Caco-2 (cell line): ENCODE measurements at regions of chr9 and their contacts with region 1.

Region 1: GRCh38 chr9:14353222-14354056 is 39.5 kb upstream of the NFIB start:
- DNase-seq: peak; percentile 75 to 85
- H3K4me3 ChIP-seq: no peak overlapping the region
- H3K4me3 Mint-ChIP-seq: no peak overlapping the region
- H3K27ac Mint-ChIP-seq: no peak overlapping the region
- H3K4me1 ChIP-seq: no peaks in the 10 kb centered on the region
- H3K4me1 Mint-ChIP-seq: no peaks in the 10 kb centered on the region
- H3K27me3 ChIP-seq: no peaks in the 10 kb centered on the region; the same call in 1 of the 2 replicates
- H3K27me3 Mint-ChIP-seq: peaks cover 24% of the 10 kb centered on the region
- CTCF ChIP-seq: peak; percentile 63 to 84

Region 2: GRCh38 chr9:13351778-13352386 is 1001.6 kb before region 1 on chr9:
- CTCF ChIA-PET with region 1: no interaction called
- POLR2A ChIA-PET with region 1: no interaction called
- intact Hi-C with region 1: loop called (anchors 5 kb)
- DNase-seq: no peak
- H3K4me3 ChIP-seq: no peak overlapping the region
- H3K4me3 Mint-ChIP-seq: no peak overlapping the region
- H3K27ac Mint-ChIP-seq: no peak overlapping the region
- H3K4me1 ChIP-seq: no peaks in the 10 kb centered on the region
- H3K4me1 Mint-ChIP-seq: no peaks in the 10 kb centered on the region
- H3K27me3 ChIP-seq: no peaks in the 10 kb centered on the region
- H3K27me3 Mint-ChIP-seq: peaks cover 3% of the 10 kb centered on the region
- CTCF ChIP-seq: peak in 1 of 2 experiments; percentile 22

Region 3: GRCh38 chr9:13898957-13899356 is 454.5 kb before region 1 on chr9:
- CTCF ChIA-PET with region 1: no interaction called
- POLR2A ChIA-PET with region 1: no interaction called
- intact Hi-C with region 1: no loop called
- DNase-seq: no peak
- H3K4me3 ChIP-seq: no peak overlapping the region
- H3K4me3 Mint-ChIP-seq: no peak overlapping the region
- H3K27ac Mint-ChIP-seq: no peak overlapping the region
- H3K4me1 ChIP-seq: no peaks in the 10 kb centered on the region
- H3K4me1 Mint-ChIP-seq: no peaks in the 10 kb centered on the region
- H3K27me3 ChIP-seq: no peaks in the 10 kb centered on the region
- H3K27me3 Mint-ChIP-seq: no peaks in the 10 kb centered on the region
- CTCF ChIP-seq: no peak

Region 4: DNA sequence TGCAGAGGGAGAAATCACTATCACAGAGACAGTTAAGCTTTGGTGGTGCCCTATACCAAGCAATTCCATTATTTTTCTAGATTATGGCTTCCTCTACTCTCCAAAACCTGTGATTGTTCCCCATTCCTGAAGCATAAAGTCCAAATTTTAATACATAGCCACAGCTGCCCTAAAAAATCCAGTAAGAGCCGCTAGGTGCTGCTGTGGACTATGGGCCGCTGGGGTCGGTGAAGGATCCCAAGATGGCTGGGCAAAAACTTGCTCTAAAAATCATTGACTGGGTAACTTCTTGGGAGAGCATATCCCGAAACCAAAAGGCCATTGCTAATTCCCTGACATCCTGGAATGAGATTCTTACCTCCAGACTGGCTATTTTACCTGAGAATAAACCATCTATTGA is 284.7 kb before region 1 on chr9:
- CTCF ChIA-PET with region 1: no interaction called
- POLR2A ChIA-PET with region 1: no interaction called
- intact Hi-C with region 1: loop called (anchors 1 kb)
- DNase-seq: no peak
- H3K4me3 ChIP-seq: no peak overlapping the region
- H3K4me3 Mint-ChIP-seq: no peak overlapping the region
- H3K27ac Mint-ChIP-seq: no peak overlapping the region
- H3K4me1 ChIP-seq: no peaks in the 10 kb centered on the region
- H3K4me1 Mint-ChIP-seq: no peaks in the 10 kb centered on the region
- H3K27me3 ChIP-seq: no peaks in the 10 kb centered on the region
- H3K27me3 Mint-ChIP-seq: no peaks in the 10 kb centered on the region
- CTCF ChIP-seq: no peak